Naive thymus-derived CD4-positive, alpha-beta T cell (primary cell): ENCODE measurements at regions of chr6 and their contacts with region 1.

Region 1: GRCh38 chr6:42547407-42548329 is 16.2 kb upstream of the UBR2 start:
- DNase-seq: peak; percentile 73 to 94 (median 86)
- ATAC-seq: peak; percentile 100
- H3K4me3 ChIP-seq: peak overlapping the region; percentile 52
- H3K4me3 Mint-ChIP-seq: peak overlapping the region; percentile 23 to 78 (median 68)
- H3K27ac ChIP-seq: peak overlapping the region; percentile 26
- H3K27ac Mint-ChIP-seq: peak overlapping the region in 7 of 9 donors; percentile 42 to 74 (median 48)
- H3K4me1 ChIP-seq: peaks cover 5 to 13% of the 10 kb centered on the region in 2 donors
- H3K4me1 Mint-ChIP-seq: peaks cover 5 to 14% (median 12%) of the 10 kb centered on the region in 7 donors
- H3K27me3 ChIP-seq: no peaks in the 10 kb centered on the region
- H3K27me3 Mint-ChIP-seq: peaks cover 0 to 12% (median 9%) of the 10 kb centered on the region in 5 donors

Region 2: DNA sequence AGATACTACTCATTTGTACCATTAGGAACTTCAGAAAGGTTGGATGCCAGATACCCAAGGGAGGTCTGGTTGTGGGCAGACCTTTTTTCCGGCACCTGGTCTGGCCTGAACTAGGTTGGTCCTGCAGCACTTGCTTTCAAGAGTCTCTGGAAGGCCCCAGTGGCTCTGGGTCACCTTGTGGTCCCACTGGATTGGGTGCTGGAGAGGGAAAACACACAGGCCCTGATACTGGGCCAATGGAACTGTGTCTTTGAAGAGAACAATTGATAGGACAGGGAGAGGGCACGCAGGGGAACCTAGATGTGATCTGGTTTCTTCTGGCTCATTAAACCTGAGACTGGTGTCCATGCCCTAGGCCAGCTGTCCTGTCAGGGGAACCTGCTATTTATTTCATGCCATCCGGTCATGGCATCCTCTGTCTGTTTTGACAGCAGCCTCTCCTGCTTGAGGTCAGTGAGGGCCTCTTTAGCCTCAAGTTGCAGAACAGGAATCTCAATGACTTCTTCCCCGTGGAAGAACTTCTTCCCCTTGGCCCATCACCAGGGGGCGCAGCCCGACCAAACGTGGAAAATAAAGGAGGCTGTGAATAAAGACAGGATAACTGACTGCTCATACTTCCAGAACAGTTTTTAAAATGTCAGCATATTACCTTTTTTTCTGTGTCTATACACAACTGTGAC is 472.4 kb before region 1 on chr6:
- CTCF ChIA-PET with region 1: no interaction called
- POLR2A ChIA-PET with region 1: no interaction called
- intact Hi-C with region 1: loop called (anchors 1 to 10 kb)
- DNase-seq: peak in 8 of 9 donors; percentile 30 to 69 (median 36)
- ATAC-seq: no peak
- H3K4me3 ChIP-seq: no peak overlapping the region
- H3K4me3 Mint-ChIP-seq: no peak overlapping the region
- H3K27ac ChIP-seq: no peak overlapping the region
- H3K27ac Mint-ChIP-seq: peak overlapping the region in 6 of 9 donors; percentile 17 to 69 (median 52)
- H3K4me1 ChIP-seq: no peaks in the 10 kb centered on the region
- H3K4me1 Mint-ChIP-seq: peaks cover 0 to 12% (median 4%) of the 10 kb centered on the region in 7 donors
- H3K27me3 ChIP-seq: no peaks in the 10 kb centered on the region
- H3K27me3 Mint-ChIP-seq: no peaks in the 10 kb centered on the region

Region 3: DNA sequence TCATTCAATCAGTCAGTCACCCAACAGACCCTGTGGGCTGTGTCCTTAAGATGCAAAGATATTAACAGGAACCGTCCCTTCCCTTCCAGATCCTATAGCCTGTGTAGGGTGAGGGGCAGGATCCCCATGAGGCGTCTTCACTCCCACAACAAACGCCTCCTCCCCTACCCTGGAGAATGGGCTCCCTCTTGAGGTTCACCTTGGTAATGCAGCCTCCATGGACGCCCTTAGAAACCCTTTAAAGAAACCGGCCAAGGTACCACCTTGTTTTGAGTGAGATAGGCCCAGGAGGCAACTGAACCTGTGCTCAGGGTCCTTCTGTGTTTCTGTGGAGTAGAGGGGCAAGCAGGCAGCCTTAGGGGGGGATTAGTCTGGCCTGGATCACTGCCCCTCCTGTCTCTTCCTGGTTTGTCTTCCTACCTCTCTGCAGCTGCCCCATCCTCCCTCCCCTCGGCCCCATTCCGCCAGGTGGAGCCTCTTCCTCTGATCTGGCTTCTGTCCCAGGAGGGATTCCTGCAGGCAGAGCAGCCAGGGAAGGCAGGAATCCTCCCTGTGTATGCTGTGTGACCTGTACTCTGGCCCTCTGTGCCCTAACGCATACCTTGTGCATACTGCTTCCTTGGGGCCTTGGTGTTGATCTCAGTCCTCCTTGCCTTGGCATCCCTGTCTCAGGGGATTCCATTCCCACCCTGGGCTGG is 381.1 kb before region 1 on chr6:
- CTCF ChIA-PET with region 1: no interaction called
- POLR2A ChIA-PET with region 1: no interaction called
- intact Hi-C with region 1: loop called in 1 of 2 experiments (anchors 5 kb)
- DNase-seq: peak; percentile 48 to 83 (median 71)
- ATAC-seq: peak; percentile 95
- H3K4me3 ChIP-seq: no peak overlapping the region
- H3K4me3 Mint-ChIP-seq: no peak overlapping the region
- H3K27ac ChIP-seq: no peak overlapping the region
- H3K27ac Mint-ChIP-seq: peak overlapping the region in 2 of 9 donors; percentile 10 to 51
- H3K4me1 ChIP-seq: no peaks in the 10 kb centered on the region
- H3K4me1 Mint-ChIP-seq: peaks cover 0 to 10% (median 5%) of the 10 kb centered on the region in 7 donors
- H3K27me3 ChIP-seq: no peaks in the 10 kb centered on the region
- H3K27me3 Mint-ChIP-seq: peaks cover 0 to 6% (median 3%) of the 10 kb centered on the region in 5 donors

Region 4: GRCh38 chr6:42212442-42212841 is 335.2 kb before region 1 on chr6:
- CTCF ChIA-PET with region 1: interaction called, 16 read pairs
- POLR2A ChIA-PET with region 1: interaction called, 5 read pairs
- intact Hi-C with region 1: loop called (anchors 1 to 5 kb)
- DNase-seq: no peak
- ATAC-seq: no peak
- H3K4me3 ChIP-seq: no peak overlapping the region
- H3K4me3 Mint-ChIP-seq: no peak overlapping the region
- H3K27ac ChIP-seq: no peak overlapping the region
- H3K27ac Mint-ChIP-seq: no peak overlapping the region
- H3K4me1 ChIP-seq: peaks cover 9 to 10% of the 10 kb centered on the region in 2 donors
- H3K4me1 Mint-ChIP-seq: peaks cover 6 to 34% (median 19%) of the 10 kb centered on the region in 7 donors
- H3K27me3 ChIP-seq: no peaks in the 10 kb centered on the region
- H3K27me3 Mint-ChIP-seq: no peaks in the 10 kb centered on the region

Region 5: GRCh38 chr6:42260972-42261371 is 286.7 kb before region 1 on chr6:
- CTCF ChIA-PET with region 1: interaction called, 49 read pairs
- POLR2A ChIA-PET with region 1: interaction called, 4 read pairs
- intact Hi-C with region 1: loop called (anchors 1 kb)
- DNase-seq: peak in 6 of 9 donors; percentile 11 to 42 (median 34)
- ATAC-seq: peak; percentile 71
- H3K4me3 ChIP-seq: no peak overlapping the region
- H3K4me3 Mint-ChIP-seq: no peak overlapping the region
- H3K27ac ChIP-seq: no peak overlapping the region
- H3K27ac Mint-ChIP-seq: peak overlapping the region in 2 of 9 donors; percentile 38 to 60
- H3K4me1 ChIP-seq: peaks cover 0 to 7% of the 10 kb centered on the region in 2 donors
- H3K4me1 Mint-ChIP-seq: peaks cover 0 to 14% (median 4%) of the 10 kb centered on the region in 7 donors
- H3K27me3 ChIP-seq: no peaks in the 10 kb centered on the region
- H3K27me3 Mint-ChIP-seq: no peaks in the 10 kb centered on the region

Region 6: GRCh38 chr6:42367353-42368011 is 180.2 kb before region 1 on chr6:
- CTCF ChIA-PET with region 1: no interaction called
- POLR2A ChIA-PET with region 1: no interaction called
- intact Hi-C with region 1: loop called in 1 of 2 experiments (anchors 5 kb)
- DNase-seq: peak in 4 of 9 donors; percentile 22 to 35 (median 32)
- ATAC-seq: peak; percentile 70
- H3K4me3 ChIP-seq: peak overlapping the region; percentile 42
- H3K4me3 Mint-ChIP-seq: peak overlapping the region; percentile 68 to 87 (median 80)
- H3K27ac ChIP-seq: peak overlapping the region; percentile 58
- H3K27ac Mint-ChIP-seq: peak overlapping the region; percentile 80 to 98 (median 94)
- H3K4me1 ChIP-seq: peaks cover 48 to 68% of the 10 kb centered on the region in 2 donors
- H3K4me1 Mint-ChIP-seq: peaks cover 63 to 84% (median 73%) of the 10 kb centered on the region in 7 donors
- H3K27me3 ChIP-seq: no peaks in the 10 kb centered on the region
- H3K27me3 Mint-ChIP-seq: no peaks in the 10 kb centered on the region

Region 7: GRCh38 chr6:42532038-42532669 is 15.5 kb before region 1 on chr6:
- CTCF ChIA-PET with region 1: interaction called, 24 read pairs
- POLR2A ChIA-PET with region 1: no interaction called
- intact Hi-C with region 1: no loop called
- DNase-seq: peak in 7 of 9 donors; percentile 15 to 50 (median 39)
- ATAC-seq: peak; percentile 47
- H3K4me3 ChIP-seq: no peak overlapping the region
- H3K4me3 Mint-ChIP-seq: no peak overlapping the region
- H3K27ac ChIP-seq: no peak overlapping the region
- H3K27ac Mint-ChIP-seq: no peak overlapping the region
- H3K4me1 ChIP-seq: no peaks in the 10 kb centered on the region
- H3K4me1 Mint-ChIP-seq: no peaks in the 10 kb centered on the region
- H3K27me3 ChIP-seq: no peaks in the 10 kb centered on the region
- H3K27me3 Mint-ChIP-seq: no peaks in the 10 kb centered on the region

Region 8: DNA sequence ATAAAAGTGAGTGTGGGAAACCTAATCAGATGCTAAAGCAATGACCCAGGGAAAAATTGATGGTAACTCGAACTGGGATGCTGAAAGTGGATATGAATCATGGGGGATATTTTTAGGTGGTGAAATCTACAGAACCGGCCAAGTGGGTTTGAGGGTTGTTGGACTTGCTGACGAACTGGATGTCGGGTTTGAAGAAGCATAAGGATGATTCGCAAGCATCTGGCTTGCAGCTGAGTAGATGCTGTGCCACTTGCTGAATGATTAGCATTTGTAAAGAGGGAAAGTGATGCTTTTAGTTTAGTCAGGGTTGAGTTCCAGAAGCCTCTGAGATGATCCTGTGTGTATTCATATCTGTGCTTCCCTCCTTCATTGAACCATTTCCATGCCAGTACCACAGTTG is 71.0 kb after region 1 on chr6:
- CTCF ChIA-PET with region 1: no interaction called
- POLR2A ChIA-PET with region 1: no interaction called
- intact Hi-C with region 1: no loop called
- DNase-seq: no peak
- ATAC-seq: no peak
- H3K4me3 ChIP-seq: no peak overlapping the region
- H3K4me3 Mint-ChIP-seq: no peak overlapping the region
- H3K27ac ChIP-seq: no peak overlapping the region
- H3K27ac Mint-ChIP-seq: peak overlapping the region in 2 of 9 donors; percentile 12 to 61
- H3K4me1 ChIP-seq: no peaks in the 10 kb centered on the region
- H3K4me1 Mint-ChIP-seq: peaks cover 0 to 4% (median 0%) of the 10 kb centered on the region in 7 donors
- H3K27me3 ChIP-seq: no peaks in the 10 kb centered on the region
- H3K27me3 Mint-ChIP-seq: no peaks in the 10 kb centered on the region